GM13977 (cell line): ENCODE measurements at regions of chr14 and their contacts with region 1.

Region 1: GRCh38 chr14:65412032-65412846 is at the start of gene FUT8:
- DNase-seq: peak; percentile 85
- CTCF ChIP-seq: peak; percentile 65

Region 2: DNA sequence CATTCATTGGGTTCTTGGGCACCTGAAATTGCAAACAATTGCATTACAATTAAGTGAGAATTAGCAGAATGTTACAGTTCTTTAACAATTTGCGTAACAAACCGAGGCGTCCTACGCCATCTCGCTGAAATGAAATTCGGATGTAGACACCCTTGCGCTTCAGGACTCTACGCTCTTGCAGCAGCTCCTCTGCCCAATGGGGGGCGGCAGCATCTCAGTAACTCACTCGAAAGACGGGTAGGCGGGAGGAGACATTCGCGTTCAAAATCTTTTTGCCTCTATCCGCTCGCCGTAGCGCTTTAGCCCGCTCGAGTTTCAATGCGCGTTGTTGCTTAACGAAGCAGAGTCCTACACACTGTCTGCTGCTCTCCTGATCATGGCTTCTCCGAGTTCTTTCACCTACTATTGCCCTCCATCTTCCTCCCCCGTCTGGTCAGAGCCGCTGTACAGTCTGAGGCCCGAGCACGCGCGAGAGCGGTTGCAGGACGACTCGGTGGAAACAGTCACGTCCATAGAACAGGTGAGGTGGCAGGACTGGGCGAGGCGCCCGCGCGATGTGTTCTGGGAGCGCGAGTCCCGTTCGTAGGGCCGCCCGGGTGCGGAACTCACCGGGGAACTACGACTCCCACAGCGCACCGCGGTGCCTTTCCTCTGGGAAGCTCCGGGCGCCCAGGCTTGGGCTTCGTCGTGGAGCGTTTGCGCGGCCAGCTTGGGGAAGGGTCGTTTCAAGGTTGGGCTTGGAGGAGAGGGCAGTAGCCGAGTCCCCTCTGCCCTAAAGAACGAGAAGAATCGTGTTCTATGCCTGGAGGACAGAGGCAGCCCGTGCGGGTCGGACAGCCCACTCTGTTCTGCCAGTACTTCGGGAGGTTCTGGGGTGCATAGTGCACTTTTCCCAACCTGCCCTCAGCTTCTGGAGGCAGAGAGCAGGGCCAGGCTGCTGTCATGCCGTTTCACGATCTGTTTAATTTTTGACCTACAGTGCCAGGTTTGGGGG is 425.4 kb before region 1 on chr14 and contains the start of gene FNTB:
- in situ Hi-C with region 1: loop called (anchors 25 kb)
- DNase-seq: peak; percentile 94
- CTCF ChIP-seq: peak; percentile 98

Region 3: GRCh38 chr14:65832431-65833266 is 420.4 kb after region 1 on chr14:
- in situ Hi-C with region 1: loop called (anchors 25 kb)
- DNase-seq: no peak
- CTCF ChIP-seq: peak; percentile 26

Region 4: DNA sequence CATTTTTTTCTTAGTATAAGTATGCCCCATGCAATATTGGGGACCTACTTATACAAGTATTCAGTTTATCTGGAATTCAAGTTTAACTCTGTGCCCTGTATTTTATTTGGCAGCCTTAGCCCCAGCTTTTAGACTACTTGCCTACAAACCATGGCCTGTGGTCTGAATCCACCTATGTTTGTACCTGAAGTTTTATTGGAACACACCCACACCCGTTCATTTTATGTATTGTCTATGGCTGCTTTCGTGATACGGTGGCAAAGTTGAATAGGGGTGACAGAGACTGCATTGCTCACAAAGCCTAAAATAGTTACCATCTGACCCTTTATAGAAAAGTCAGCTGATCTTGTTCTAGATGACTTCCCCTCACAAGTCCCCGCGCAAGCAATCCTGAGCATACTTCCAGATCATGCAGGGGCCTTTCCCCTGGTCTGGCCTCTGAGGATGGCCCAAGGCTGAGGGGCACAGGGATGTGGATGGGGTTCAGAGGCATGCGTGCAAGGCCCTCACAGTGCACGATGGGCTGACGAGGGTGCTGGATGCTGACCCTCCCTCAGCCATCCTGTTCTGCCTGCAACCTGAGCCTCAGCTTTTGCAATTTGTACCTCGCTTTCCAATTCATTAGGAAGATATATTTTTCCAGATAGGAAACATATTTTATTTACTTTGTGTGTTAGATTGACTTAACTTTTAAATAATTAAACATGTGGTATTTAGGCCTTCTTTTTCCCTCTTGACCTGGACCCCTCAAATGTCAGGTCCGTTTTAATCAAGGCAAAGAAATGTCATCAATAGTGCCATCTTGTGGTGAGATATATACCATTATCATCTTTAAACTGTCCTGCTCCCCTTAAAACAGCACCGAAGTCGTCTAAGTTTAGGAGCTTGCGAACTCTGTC is 546.7 kb after region 1 on chr14:
- in situ Hi-C with region 1: loop called (anchors 25 kb)
- DNase-seq: peak; percentile 42
- CTCF ChIP-seq: peak; percentile 52